Spleen (tissue), 13 donors: ENCODE measurements at regions of chr3 and their contacts with region 1.

Region 1: GRCh38 chr3:49021813-49022687 is at the start of gene NDUFAF3:
- DNase-seq: peak; percentile 99
- H3K4me3 ChIP-seq: peak within 1 kb of the TSS; percentile 67 to 96 (median 88)
- H3K27ac ChIP-seq: peak within 1 kb of the TSS; percentile 98 to 100 (median 100)
- H3K4me1 ChIP-seq: peaks cover 32 to 88% (median 66%) of the 10 kb centered on the region in 6 donors
- H3K27me3 ChIP-seq: no peaks in the 10 kb centered on the region
- CTCF ChIP-seq: peak; percentile 94 to 100 (median 99)
- POLR2A ChIP-seq: peak in 2 of 3 donors; percentile 68 to 77
- total RNA-seq, gene NDUFAF3: 63.8 to 98.5 (median 80.1) TPM

Region 2: DNA sequence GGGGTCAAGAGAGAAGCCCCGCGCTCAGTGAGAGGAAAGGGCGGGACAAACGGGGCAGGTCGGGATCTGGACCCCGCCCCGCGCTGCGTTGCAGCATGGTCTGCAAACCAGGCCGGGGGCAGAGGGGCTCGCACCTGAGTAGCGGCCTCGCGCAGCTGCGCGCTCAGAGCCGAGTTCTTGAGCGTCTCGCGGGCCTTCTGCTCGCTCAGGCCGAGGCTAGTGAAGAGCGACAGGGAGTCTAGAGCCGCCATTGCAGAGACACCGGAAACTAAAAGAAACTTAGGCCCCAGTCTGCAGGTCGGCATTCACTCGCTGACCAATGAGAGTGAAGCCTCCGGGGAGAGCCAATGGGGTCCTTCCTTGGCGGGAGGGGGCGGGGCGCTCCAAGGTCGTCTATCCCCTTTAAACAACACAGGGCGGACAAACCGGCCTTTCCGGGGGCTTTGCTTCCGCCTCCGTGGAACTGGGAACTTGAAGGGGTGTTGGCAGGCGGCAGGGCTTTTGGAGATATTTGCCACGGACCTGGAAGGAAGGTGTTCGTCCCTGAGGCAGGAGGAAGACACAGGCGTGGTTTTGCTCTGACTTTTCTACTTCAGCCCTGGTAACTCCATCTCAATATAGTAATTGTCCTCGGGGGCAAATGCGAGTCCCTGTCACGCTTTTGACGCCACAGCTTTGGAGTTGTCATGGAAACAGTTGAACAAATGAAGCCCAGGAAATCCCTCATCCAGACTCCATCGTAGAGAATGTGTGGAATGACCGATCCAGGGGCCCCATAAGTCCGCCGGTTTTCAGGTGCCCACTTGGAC is 82.6 kb after region 1 on chr3 and contains the start of gene QARS1:
- intact Hi-C with region 1: loop called (anchors 10 kb)
- DNase-seq: peak; percentile 95
- H3K4me3 ChIP-seq: peak within 1 kb of the TSS; percentile 84 to 97 (median 92)
- H3K27ac ChIP-seq: peak within 1 kb of the TSS; percentile 79 to 94 (median 90)
- H3K4me1 ChIP-seq: peaks cover 16 to 46% (median 27%) of the 10 kb centered on the region in 6 donors
- H3K27me3 ChIP-seq: no peaks in the 10 kb centered on the region
- CTCF ChIP-seq: no peak
- POLR2A ChIP-seq: no peak
- total RNA-seq, gene QARS1: 174 to 238 (median 212) TPM

Region 3: DNA sequence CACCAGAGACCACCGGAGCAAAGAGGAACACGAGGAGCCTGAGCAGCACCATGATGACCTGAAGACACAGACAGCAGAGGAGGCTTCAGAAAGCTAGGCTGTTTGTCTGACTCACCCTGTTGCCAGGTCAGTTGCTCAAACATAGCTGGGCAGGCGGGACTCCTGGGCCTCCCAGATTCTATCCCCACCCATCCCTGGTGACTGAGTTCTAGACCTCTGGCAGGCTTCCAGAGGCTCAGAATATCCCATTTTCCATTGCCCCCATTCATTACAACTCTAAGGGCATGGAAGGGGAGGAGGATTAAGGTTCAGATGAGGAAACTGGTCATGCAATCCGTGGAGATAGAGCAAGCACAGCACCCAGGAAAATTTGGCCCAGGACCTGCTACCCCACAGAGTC is 777.7 kb after region 1 on chr3 and contains the start of gene CDHR4:
- intact Hi-C with region 1: no loop called
- DNase-seq: no peak
- H3K4me3 ChIP-seq: no peak within 1 kb of the TSS
- H3K27ac ChIP-seq: no peak within 1 kb of the TSS
- H3K4me1 ChIP-seq: peaks cover 9 to 26% (median 20%) of the 10 kb centered on the region in 6 donors
- H3K27me3 ChIP-seq: no peaks in the 10 kb centered on the region
- CTCF ChIP-seq: no peak
- POLR2A ChIP-seq: no peak
- total RNA-seq, gene CDHR4: not detected